Activated naive CD4-positive, alpha-beta T cell treated with anti-CD3 and anti-CD28 coated beads for 36 hours (primary cell): ENCODE measurements at regions of chr4 and their contacts with region 1.

Region 1: GRCh38 chr4:113962016-113962347 is 17.5 kb downstream of the ARSJ start:
- DNase-seq: no peak
- H3K4me3 Mint-ChIP-seq: no peak overlapping the region
- H3K27ac Mint-ChIP-seq: no peak overlapping the region
- H3K4me1 Mint-ChIP-seq: no peaks in the 10 kb centered on the region
- H3K27me3 Mint-ChIP-seq: peaks cover 2% of the 10 kb centered on the region

Region 2: DNA sequence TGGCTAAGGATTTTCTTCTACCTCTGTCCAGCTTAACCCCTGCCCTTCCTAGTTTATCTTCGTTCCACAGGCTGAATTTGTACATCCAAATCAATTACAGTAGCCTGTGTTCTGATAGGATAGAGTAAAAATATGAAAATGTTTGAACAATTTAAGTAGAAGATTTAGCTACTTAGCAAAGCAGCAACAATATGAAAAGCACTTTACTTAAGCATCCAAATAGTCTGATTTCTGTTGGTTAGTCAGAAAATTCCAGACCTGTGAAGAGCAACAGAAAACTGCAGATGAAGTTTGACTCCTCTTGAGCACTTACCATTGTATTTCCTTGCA is 15.5 kb after region 1 on chr4:
- CTCF ChIA-PET with region 1: no interaction called
- intact Hi-C with region 1: loop called (anchors 2 kb)
- DNase-seq: no peak
- H3K4me3 Mint-ChIP-seq: no peak overlapping the region
- H3K27ac Mint-ChIP-seq: no peak overlapping the region
- H3K4me1 Mint-ChIP-seq: peaks cover 11% of the 10 kb centered on the region
- H3K27me3 Mint-ChIP-seq: peaks cover 34% of the 10 kb centered on the region